Activated T-helper 1 cell treated with anti-CD3 and anti-CD28 coated beads, Interleukin-12 subunit alpha, Interleukin-12 subunit beta, Interleukin-2, Interleukin-4 antibody, amounts not matched to agents 30 ng/mL and 10 ng/mL and 1 ng/mL, durations not matched to agents 14 hours and 24 hours and 36 hours (primary cell): ENCODE measurements at regions of chr12 and their contacts with region 1.

Region 1: GRCh38 chr12:47651368-47652254 is 54.2 kb downstream of the RPAP3 start:
- DNase-seq: peak; percentile 31
- H3K4me3 Mint-ChIP-seq: no peak overlapping the region
- H3K27ac Mint-ChIP-seq: no peak overlapping the region
- H3K4me1 Mint-ChIP-seq: peaks cover 10% of the 10 kb centered on the region
- H3K27me3 Mint-ChIP-seq: no peaks in the 10 kb centered on the region

Region 2: GRCh38 chr12:47473091-47473490 is 178.5 kb before region 1 on chr12:
- intact Hi-C with region 1: no loop called
- DNase-seq: no peak
- H3K4me3 Mint-ChIP-seq: no peak overlapping the region
- H3K27ac Mint-ChIP-seq: no peak overlapping the region
- H3K4me1 Mint-ChIP-seq: no peaks in the 10 kb centered on the region
- H3K27me3 Mint-ChIP-seq: no peaks in the 10 kb centered on the region

Region 3: DNA sequence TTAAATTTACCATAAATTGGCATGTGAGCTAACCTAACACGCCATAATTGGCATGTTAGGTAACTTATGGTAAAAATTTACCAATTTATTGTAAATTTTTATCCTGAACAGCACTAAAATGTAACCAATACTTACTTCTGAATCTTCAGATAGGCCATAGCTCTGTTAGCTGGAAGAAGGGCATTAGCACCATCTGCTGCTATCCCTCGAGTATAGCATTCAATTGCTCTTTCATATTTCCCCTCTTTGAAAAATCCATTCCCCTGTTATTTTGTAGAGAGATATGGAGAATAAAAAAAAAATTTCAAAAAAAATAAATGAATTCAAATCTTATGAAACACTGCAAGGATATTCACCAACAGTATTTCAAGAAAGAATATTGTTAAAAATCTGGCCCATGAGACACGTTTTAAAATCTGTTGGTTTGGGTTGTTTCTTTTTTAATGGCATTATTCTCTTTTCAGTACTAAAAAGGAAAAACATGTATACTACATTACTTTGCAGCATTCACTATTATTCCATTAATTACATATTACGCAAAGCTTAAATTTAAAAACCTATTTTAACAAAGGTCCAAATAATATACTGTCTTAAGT is 35.1 kb after region 1 on chr12:
- intact Hi-C with region 1: loop called (anchors 1 kb)
- DNase-seq: no peak
- H3K4me3 Mint-ChIP-seq: no peak overlapping the region
- H3K27ac Mint-ChIP-seq: no peak overlapping the region
- H3K4me1 Mint-ChIP-seq: peaks cover 7% of the 10 kb centered on the region
- H3K27me3 Mint-ChIP-seq: no peaks in the 10 kb centered on the region